ENCODE measurements at regions of chr17 and their contacts with region 1.

Region 1: DNA sequence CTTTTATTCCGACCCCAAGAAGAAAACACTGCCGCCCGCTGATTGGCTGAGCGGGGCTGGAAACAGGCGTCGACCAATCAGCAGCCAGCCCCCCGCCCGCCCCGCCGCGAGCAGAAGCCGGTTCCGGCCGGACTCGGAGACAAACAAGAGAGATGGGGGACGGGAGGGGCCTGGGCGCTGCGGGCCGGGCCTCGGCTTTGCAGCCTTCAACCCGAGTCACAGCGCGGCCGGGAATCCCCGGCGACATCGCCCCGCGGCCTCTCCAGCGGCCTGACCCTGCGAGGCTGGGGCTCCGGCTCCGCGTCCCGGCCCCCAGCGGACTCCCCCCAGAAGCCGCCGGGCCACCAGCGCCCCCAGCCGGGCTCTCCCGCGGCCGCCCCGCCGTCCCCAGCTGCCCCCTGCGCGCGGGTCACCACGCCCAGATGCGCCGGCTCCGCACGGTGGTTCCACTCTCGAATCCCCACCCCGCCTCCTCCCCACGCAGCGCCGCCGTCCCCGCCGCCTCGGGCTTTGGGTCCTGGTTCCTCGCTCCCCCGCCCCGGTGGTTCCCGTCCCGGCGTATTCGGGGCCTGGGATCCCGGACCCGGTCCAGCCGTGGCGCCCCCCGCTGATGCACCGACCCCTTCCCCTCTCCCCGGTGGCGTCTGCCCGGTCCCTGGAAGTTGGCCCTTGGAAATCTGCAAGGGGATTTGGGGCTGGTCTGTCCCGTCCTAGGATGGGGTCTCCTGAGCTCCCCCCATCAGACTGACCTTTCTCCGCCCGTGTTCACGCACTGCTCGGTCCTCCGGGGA is 417 bp upstream of the SLC43A2 start:
- DNase-seq: peak; percentile 85
- ATAC-seq: peak; percentile 70
- H3K4me3 Mint-ChIP-seq: peak overlapping the region; percentile 99
- H3K27ac Mint-ChIP-seq: peak overlapping the region; percentile 98
- H3K4me1 Mint-ChIP-seq: peaks cover 56% of the 10 kb centered on the region
- H3K27me3 Mint-ChIP-seq: no peaks in the 10 kb centered on the region
- CTCF ChIP-seq: no peak

Region 2: GRCh38 chr17:1267471-1267947 is 361.5 kb before region 1 on chr17:
- CTCF ChIA-PET with region 1: interaction called, 3 read pairs
- POLR2A ChIA-PET with region 1: no interaction called
- intact Hi-C with region 1: loop called (anchors 5 kb)
- DNase-seq: no peak
- ATAC-seq: no peak
- H3K4me3 Mint-ChIP-seq: peak overlapping the region; percentile 86
- H3K27ac Mint-ChIP-seq: peak overlapping the region; percentile 83
- H3K4me1 Mint-ChIP-seq: peaks cover 12% of the 10 kb centered on the region
- H3K27me3 Mint-ChIP-seq: no peaks in the 10 kb centered on the region
- CTCF ChIP-seq: no peak

Region 3: GRCh38 chr17:1447052-1447451 is 182.0 kb before region 1 on chr17:
- CTCF ChIA-PET with region 1: no interaction called
- POLR2A ChIA-PET with region 1: no interaction called
- intact Hi-C with region 1: no loop called
- DNase-seq: no peak
- ATAC-seq: no peak
- H3K4me3 Mint-ChIP-seq: no peak overlapping the region
- H3K27ac Mint-ChIP-seq: no peak overlapping the region
- H3K4me1 Mint-ChIP-seq: peaks cover 33% of the 10 kb centered on the region
- H3K27me3 Mint-ChIP-seq: no peaks in the 10 kb centered on the region
- CTCF ChIP-seq: no peak

Region 4: DNA sequence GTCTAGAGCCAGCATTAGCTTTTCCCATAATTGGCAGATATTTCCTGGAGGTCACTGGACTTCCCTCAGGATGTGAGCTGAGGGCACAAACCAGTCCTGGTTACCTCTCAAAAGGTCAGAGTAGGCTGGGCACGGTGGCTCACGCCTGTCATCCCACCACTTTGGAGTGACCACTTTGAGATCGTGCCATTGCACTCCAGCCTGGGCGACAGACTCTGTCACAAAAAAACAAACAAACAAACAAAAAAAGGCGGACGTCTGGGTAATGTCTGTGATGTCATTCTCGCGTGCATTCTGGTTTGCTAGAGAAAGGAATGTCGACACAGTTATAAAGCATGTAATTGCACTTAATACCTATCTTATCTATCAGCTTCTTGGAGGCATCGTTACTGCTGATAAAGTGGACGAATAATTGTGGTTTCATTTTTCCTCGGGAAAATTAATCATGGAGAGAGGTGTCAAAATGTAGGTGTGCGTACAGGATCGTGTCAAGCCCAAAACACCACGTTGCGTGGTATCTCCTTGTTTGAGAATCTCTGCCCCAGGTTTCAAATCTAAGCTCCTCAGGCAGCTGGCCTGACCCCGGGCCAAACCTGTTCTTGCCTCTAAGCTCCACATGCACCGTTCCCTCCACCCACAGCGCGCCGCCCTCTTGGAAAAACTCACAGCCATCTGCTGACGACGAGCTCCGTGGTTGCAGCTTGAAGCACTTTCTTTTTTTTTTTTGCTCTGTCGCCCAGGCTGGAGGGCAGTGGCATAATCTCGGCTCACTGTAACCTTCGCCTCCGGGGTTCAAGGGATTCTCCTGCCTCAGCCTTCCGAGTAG is 166.6 kb before region 1 on chr17:
- CTCF ChIA-PET with region 1: interaction called, 3 read pairs
- POLR2A ChIA-PET with region 1: interaction called, 10 read pairs
- intact Hi-C with region 1: loop called (anchors 2 kb)
- DNase-seq: no peak
- ATAC-seq: no peak
- H3K4me3 Mint-ChIP-seq: peak overlapping the region; percentile 66
- H3K27ac Mint-ChIP-seq: peak overlapping the region; percentile 73
- H3K4me1 Mint-ChIP-seq: peaks cover 37% of the 10 kb centered on the region
- H3K27me3 Mint-ChIP-seq: no peaks in the 10 kb centered on the region
- CTCF ChIP-seq: no peak

Region 5: DNA sequence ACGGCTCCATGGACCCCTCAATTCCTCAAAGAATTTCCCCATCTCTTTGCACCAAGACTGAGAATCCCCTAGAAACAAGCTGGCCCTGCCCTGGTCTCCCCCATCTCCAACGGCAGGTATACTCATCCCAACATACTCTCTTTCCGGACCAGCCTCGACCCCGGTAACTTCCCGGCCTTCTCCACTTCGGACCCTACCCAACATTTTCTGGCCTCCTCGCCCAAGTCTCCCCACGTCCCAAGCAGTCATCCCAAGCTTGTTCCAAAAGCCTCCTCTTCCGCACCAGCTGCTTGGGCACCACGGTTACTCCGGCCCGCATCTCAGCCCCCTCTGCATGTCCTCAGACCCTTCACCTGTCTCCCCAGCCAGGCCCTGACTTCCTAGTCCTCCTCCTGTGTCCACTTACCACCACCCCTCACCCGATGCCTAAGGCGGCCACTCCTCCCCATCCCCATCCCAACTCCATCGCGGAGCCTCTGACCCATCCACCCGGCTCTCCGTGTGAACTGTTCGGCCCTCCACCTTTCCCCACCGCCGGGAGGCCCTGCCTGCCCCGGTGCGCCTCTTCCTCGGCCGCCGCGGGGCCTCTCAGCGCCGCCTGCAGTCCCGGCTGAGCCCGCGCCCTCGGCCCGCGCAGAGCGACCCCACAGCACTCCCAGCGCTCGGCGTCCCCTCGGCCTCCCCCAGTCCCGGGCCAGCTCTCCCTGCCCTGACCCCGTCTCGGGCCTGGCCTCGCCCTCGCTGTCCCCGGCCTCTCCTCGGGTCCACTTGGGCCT is 67.5 kb before region 1 on chr17:
- CTCF ChIA-PET with region 1: interaction called, 8 read pairs
- POLR2A ChIA-PET with region 1: interaction called, 418 read pairs
- intact Hi-C with region 1: loop called (anchors 1 kb)
- DNase-seq: peak; percentile 54
- ATAC-seq: peak; percentile 26
- H3K4me3 Mint-ChIP-seq: peak overlapping the region; percentile 86
- H3K27ac Mint-ChIP-seq: peak overlapping the region; percentile 71
- H3K4me1 Mint-ChIP-seq: peaks cover 52% of the 10 kb centered on the region
- H3K27me3 Mint-ChIP-seq: no peaks in the 10 kb centered on the region
- CTCF ChIP-seq: no peak

Region 6: DNA sequence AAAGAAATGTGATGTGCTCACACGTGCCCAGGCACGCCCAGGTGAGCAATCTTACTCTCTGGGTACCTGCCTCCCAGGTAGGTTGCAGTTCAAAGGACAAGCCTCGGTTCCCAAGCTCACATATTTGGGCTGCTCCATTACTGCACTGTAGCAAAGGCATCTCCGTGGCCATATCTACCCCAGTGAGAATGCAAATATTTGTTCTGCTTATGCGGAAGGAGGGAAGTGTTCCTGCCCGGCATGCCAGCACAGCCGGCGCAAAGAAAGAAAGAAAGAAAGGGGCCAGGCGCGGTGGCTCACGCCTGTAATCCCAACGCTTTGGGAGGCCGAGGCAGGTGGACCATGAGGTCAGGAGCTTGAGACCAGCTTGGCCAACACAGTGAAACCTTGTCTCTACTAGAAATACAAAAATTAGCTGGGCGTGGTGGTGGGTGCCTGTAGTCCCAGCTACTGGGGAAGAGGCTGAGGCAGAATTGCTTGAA is 31.1 kb before region 1 on chr17:
- CTCF ChIA-PET with region 1: interaction called, 3 read pairs
- POLR2A ChIA-PET with region 1: interaction called, 336 read pairs
- intact Hi-C with region 1: loop called (anchors 1 kb)
- DNase-seq: no peak
- ATAC-seq: no peak
- H3K4me3 Mint-ChIP-seq: no peak overlapping the region
- H3K27ac Mint-ChIP-seq: no peak overlapping the region
- H3K4me1 Mint-ChIP-seq: peaks cover 31% of the 10 kb centered on the region
- H3K27me3 Mint-ChIP-seq: no peaks in the 10 kb centered on the region
- CTCF ChIP-seq: no peak

Region 7: DNA sequence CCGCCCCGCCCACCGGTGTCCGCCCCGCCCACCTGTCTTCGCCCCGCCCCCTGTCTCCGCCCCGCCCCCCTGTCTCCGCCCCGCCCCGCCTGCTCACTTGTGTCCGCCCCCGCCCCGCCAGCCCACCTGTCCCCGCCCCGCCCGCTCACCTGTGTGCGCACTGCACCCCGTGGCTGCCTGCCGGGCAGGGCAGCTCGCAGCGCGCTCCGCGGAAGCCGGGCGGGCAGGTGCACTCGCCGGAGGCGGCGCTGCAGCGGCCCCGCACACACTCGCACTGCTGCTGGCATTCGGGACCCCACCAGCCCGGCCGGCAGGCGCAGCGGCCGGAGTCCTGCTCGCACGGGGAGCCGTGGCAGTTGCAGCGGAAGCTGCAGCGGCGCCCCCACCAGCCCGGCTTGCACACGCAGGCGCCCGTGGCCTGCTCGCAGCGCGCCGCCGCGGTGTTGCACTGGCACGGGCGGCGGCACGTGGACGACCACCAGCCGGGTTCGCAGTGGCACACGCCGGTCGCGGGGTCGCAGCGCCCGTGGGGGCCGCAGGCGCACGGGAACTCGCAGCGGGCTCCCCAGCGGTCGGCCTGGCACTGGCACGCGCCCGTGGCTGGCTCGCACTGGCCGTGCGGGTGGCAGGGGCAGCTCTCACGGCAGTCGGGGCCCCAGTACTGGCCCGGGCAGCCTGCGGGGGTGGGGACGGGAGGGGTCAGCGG is 14.4 kb after region 1 on chr17:
- CTCF ChIA-PET with region 1: interaction called, 49 read pairs
- POLR2A ChIA-PET with region 1: interaction called, 47 read pairs
- intact Hi-C with region 1: loop called (anchors 1 kb)
- DNase-seq: peak; percentile 55
- ATAC-seq: peak; percentile 35
- H3K4me3 Mint-ChIP-seq: peak overlapping the region; percentile 85
- H3K27ac Mint-ChIP-seq: no peak overlapping the region
- H3K4me1 Mint-ChIP-seq: peaks cover 41% of the 10 kb centered on the region
- H3K27me3 Mint-ChIP-seq: no peaks in the 10 kb centered on the region
- CTCF ChIP-seq: no peak

Region 8: GRCh38 chr17:1703063-1703462 is 74.0 kb after region 1 on chr17:
- CTCF ChIA-PET with region 1: no interaction called
- POLR2A ChIA-PET with region 1: no interaction called
- intact Hi-C with region 1: no loop called
- DNase-seq: no peak
- ATAC-seq: no peak
- H3K4me3 Mint-ChIP-seq: no peak overlapping the region
- H3K27ac Mint-ChIP-seq: no peak overlapping the region
- H3K4me1 Mint-ChIP-seq: no peaks in the 10 kb centered on the region
- H3K27me3 Mint-ChIP-seq: peaks cover 14% of the 10 kb centered on the region
- CTCF ChIP-seq: no peak

Region 9: GRCh38 chr17:1716076-1716995 is 87.3 kb after region 1 on chr17:
- CTCF ChIA-PET with region 1: no interaction called
- POLR2A ChIA-PET with region 1: interaction called, 18 read pairs
- intact Hi-C with region 1: no loop called
- DNase-seq: peak; percentile 100
- ATAC-seq: peak; percentile 87
- H3K4me3 Mint-ChIP-seq: peak overlapping the region; percentile 91
- H3K27ac Mint-ChIP-seq: peak overlapping the region; percentile 94
- H3K4me1 Mint-ChIP-seq: peaks cover 28% of the 10 kb centered on the region
- H3K27me3 Mint-ChIP-seq: peaks cover 11% of the 10 kb centered on the region
- CTCF ChIP-seq: no peak

Region 10: DNA sequence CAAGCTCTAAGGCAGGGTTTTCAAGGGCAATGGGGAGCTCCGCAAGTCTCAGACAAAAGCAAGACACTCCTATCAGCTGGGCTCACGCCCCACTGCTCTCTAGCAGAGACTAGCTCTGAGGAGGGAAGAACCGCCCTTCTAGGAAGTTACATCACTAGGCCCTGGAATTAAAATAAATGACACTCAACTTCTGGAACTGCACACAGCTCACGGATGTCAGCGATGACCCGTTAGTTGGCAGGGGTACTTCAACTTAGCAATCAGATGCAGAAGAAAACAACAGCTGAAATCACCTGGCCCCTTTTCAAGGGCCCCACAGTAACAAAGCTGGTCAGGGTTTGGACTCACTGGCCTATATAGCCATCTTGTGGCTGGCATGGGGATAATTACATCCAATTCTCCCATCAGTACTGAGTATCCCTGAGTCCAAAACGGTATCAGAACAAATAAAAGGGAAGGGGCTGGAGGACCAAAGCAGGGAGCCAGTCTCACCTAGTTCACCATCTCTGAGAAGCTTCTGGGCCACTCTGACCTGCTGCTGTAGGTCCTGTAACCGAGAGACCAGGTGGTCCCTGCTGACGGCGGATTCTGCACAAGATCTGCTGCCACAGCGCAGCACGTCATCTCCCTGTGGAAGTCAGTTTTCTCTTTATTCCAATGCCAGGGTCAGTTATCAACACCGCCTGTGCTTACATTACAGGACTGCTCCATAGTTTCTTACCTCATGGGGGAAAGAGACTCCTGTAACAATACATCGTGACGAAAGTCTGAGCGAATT is 155.0 kb after region 1 on chr17:
- CTCF ChIA-PET with region 1: no interaction called
- POLR2A ChIA-PET with region 1: no interaction called
- intact Hi-C with region 1: no loop called
- DNase-seq: no peak
- ATAC-seq: peak; percentile 90
- H3K4me3 Mint-ChIP-seq: peak overlapping the region; percentile 44
- H3K27ac Mint-ChIP-seq: peak overlapping the region; percentile 84
- H3K4me1 Mint-ChIP-seq: peaks cover 33% of the 10 kb centered on the region
- H3K27me3 Mint-ChIP-seq: no peaks in the 10 kb centered on the region
- CTCF ChIP-seq: no peak

Measured in activated B cell treated with CpG ODN at 0.5 μM for 24 hours (primary cell).